Prostate gland (tissue), 2 donors: ENCODE measurements at regions of chr10 and their contacts with region 1.

Region 1: DNA sequence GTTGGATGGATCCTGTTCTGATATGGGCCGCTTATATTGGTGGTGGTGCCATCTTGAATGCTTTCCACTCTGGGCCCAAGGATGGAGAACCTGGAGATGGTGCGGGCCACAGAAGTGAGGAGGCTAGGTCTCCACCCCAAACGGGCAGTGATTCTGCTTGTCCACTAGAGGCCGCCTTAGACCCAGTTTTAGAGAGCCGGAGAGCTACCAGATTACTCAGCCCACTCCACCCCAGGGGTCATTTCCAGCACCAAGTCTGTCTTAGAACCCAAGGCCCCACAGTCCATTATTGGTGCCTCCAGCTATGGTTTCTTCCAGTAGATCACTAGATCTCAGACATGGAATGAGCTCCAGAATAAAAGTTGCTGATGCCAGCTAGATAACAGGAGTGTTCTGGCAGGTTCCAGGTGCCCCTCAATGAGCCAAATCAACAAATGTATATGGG is 11.8 kb upstream of the CAMK2G start:
- DNase-seq: peak; percentile 74
- H3K4me3 ChIP-seq: no peak overlapping the region
- H3K27ac ChIP-seq: peak overlapping the region; percentile 75 to 82
- H3K4me1 ChIP-seq: peaks cover 29% of the 10 kb centered on the region
- H3K27me3 ChIP-seq: no peaks in the 10 kb centered on the region
- CTCF ChIP-seq: peak; percentile 51 to 93 (median 86)
- POLR2A ChIP-seq: no peak

Region 2: GRCh38 chr10:73940634-73941221 is 54.6 kb after region 1 on chr10:
- intact Hi-C with region 1: loop called (anchors 1 kb)
- DNase-seq: peak; percentile 76
- H3K4me3 ChIP-seq: no peak overlapping the region
- H3K27ac ChIP-seq: peak overlapping the region in 1 of 2 donors; percentile 1
- H3K4me1 ChIP-seq: peaks cover 6% of the 10 kb centered on the region
- H3K27me3 ChIP-seq: no peaks in the 10 kb centered on the region
- CTCF ChIP-seq: peak; percentile 77 to 96 (median 89)
- POLR2A ChIP-seq: no peak

Region 3: DNA sequence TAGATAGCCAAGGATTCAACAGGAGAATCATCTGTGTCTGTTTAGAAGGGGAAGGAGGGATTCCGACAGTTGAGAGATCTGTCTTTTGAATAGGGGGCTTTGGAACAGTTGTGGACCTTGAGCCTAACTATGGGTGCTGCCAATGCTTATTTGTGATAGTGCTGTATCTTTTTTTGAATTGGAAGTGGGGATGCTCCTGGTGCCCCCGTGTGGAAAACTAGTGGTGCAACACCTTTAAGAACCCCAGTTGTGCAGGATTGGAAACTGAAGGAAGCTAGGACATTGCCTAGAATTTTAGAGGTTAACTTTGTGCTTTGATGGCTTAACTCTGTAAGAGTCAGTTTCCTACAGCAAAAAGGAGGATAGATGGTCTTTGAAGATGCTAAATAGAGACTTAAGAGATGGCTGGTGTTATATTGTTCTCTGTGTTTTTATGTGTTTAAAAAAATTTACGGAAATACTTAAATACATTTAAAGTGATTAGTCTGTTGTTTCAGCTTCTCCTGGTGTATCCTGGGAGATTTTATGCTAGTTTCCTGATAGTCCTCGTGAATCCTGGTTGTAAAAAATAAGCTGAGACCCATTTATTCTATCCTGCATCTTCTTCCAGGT is 195.2 kb after region 1 on chr10:
- intact Hi-C with region 1: loop called (anchors 5 kb)
- DNase-seq: peak; percentile 16
- H3K4me3 ChIP-seq: no peak overlapping the region
- H3K27ac ChIP-seq: no peak overlapping the region
- H3K4me1 ChIP-seq: no peaks in the 10 kb centered on the region
- H3K27me3 ChIP-seq: no peaks in the 10 kb centered on the region
- CTCF ChIP-seq: peak; percentile 18 to 69 (median 48)
- POLR2A ChIP-seq: no peak

Region 4: GRCh38 chr10:74234569-74234968 is 348.5 kb after region 1 on chr10:
- intact Hi-C with region 1: loop called (anchors 2 kb)
- DNase-seq: no peak
- H3K4me3 ChIP-seq: no peak overlapping the region
- H3K27ac ChIP-seq: no peak overlapping the region
- H3K4me1 ChIP-seq: no peaks in the 10 kb centered on the region
- H3K27me3 ChIP-seq: no peaks in the 10 kb centered on the region
- CTCF ChIP-seq: peak in 3 of 4 experiments; percentile 23 to 57 (median 42)
- POLR2A ChIP-seq: no peak